ENCODE measurements at regions of chr10 and their contacts with region 1.

Region 1: DNA sequence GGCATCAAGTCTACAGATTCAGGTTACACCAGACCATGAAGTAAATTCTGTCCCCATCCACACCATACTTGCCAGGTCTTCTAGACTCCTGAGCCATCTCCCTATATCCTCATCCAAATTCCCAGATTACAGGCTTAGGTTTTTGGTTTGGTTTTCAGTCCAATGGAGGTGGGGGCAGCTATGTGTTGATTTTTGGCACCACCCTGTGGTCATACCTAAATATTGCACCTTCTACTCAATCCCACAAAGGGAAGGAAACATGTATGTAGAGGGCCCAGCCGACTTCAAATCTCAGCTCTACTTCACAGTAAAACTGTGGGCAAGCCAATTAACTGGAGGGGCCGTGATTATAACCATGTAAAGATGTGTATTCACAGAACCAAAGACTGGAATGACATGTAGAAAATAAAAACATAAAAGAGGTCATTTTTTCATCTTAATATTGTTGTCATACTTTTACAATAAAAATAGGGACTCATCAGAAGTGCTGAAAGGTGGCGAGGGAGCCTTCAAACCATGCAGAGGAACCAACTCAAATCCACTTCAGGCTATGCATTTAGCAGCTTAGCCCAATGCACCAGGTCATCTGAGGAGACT is 19.8 kb downstream of the ERCC6 start:
- DNase-seq: peak; percentile 54
- ATAC-seq: peak; percentile 93
- H3K4me3 ChIP-seq: no peak overlapping the region
- H3K27ac ChIP-seq: no peak overlapping the region
- H3K4me1 ChIP-seq: no peaks in the 10 kb centered on the region
- H3K27me3 ChIP-seq: no peaks in the 10 kb centered on the region
- CTCF ChIP-seq: peak; percentile 78
- POLR2A ChIP-seq: no peak
- RAD21 ChIP-seq: peak; percentile 78

Region 2: DNA sequence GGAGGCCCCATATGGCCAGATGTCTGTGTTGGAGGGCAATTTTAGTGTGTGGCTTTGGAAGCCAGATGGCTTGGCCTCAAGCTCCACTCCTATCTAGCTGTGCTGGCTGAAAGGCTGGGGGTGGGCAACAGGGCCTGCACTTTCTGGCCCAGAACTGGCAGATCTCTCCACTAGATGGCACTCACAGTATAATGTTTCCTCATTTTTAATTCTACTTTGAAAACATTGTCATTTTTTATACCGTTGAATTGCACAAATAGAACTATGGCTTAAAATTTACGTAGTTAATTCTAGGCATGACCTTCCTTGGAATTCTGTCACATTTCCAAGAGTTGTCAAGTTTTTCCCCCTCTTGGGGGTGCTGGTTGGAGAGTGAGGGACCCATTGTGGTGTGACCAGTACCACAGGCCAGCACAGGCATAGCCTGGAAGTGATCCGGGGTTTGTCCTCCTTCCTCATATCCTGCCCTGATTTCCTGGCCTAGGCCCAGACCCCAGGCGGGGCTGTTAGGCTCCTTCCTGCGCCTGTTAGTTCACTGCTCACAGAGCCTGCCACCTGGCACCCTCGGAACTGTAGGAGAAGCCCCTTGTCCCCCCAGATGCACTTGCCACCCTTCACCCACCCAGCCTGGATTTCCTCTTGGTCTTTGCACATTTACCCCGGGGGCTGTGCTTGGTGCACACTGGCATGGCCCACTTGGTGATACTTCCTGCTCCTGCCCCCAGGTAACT is 967.1 kb before region 1 on chr10:
- CTCF ChIA-PET with region 1: no interaction called
- POLR2A ChIA-PET with region 1: no interaction called
- dilution Hi-C with region 1: no loop called
- in situ Hi-C with region 1: loop called (anchors 25 kb)
- intact Hi-C with region 1: loop called (anchors 10 kb)
- DNase-seq: peak; percentile 59
- ATAC-seq: peak; percentile 88
- H3K4me3 ChIP-seq: no peak overlapping the region
- H3K27ac ChIP-seq: no peak overlapping the region
- H3K4me1 ChIP-seq: no peaks in the 10 kb centered on the region; the same call in 1 of the 2 replicates
- H3K27me3 ChIP-seq: no peaks in the 10 kb centered on the region
- CTCF ChIP-seq: peak; percentile 86
- POLR2A ChIP-seq: 0 out of 2 replicates have a peak, but pooled peaks have one; percentile 28
- RAD21 ChIP-seq: peak; percentile 86

Region 3: GRCh38 chr10:49164559-49165188 is 354.4 kb before region 1 on chr10:
- CTCF ChIA-PET with region 1: no interaction called
- POLR2A ChIA-PET with region 1: no interaction called
- dilution Hi-C with region 1: no loop called
- in situ Hi-C with region 1: no loop called
- intact Hi-C with region 1: loop called (anchors 10 kb)
- DNase-seq: peak; percentile 35
- ATAC-seq: 0 out of 2 replicates have a peak, but pooled peaks have one; percentile 31
- H3K4me3 ChIP-seq: no peak overlapping the region
- H3K27ac ChIP-seq: no peak overlapping the region
- H3K4me1 ChIP-seq: peaks cover 13% of the 10 kb centered on the region
- H3K27me3 ChIP-seq: no peaks in the 10 kb centered on the region
- CTCF ChIP-seq: peak; percentile 47
- POLR2A ChIP-seq: no peak
- RAD21 ChIP-seq: peak; percentile 56

Region 4: GRCh38 chr10:49407552-49408137 is 111.4 kb before region 1 on chr10:
- CTCF ChIA-PET with region 1: interaction called, 7 read pairs
- POLR2A ChIA-PET with region 1: no interaction called
- dilution Hi-C with region 1: no loop called
- in situ Hi-C with region 1: loop called (anchors 5 kb)
- intact Hi-C with region 1: loop called (anchors 1 kb)
- DNase-seq: peak; percentile 68
- ATAC-seq: peak; percentile 97
- H3K4me3 ChIP-seq: no peak overlapping the region
- H3K27ac ChIP-seq: no peak overlapping the region
- H3K4me1 ChIP-seq: no peaks in the 10 kb centered on the region
- H3K27me3 ChIP-seq: peaks cover 51% of the 10 kb centered on the region
- CTCF ChIP-seq: peak; percentile 83
- POLR2A ChIP-seq: no peak
- RAD21 ChIP-seq: peak; percentile 74